ENCODE measurements at regions of chr1 and their contacts with region 1.

Region 1: DNA sequence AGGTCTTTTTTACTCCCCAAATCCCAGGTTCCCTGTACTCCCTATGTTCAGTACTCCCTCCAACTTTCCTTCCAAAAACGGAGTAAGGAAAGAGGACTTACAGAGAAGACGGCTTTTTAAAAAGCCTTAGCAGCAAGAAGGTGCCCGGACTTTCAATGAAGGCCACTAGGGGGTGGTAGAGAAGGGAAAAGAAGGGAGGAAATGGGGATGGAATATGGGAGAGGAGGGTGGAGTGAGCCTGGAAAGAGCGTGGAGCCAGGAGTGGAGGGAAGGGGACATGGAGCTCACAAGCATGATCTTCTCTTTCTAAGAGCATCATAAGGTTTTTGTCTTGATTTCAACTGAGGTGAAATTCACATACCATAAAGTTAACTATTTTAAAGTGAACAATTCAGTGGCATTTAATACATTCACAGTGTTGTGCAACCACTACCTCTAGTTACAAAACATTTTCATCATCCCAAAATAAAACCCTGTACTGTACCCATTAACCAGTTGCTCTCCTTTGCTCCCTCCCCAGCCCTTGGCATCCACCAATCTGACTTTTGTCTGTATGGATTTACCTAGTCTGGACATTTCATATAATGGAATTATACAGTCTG is 129.9 kb downstream of the ZNF281 start:
- DNase-seq: peak; percentile 36 to 84
- H3K4me3 ChIP-seq: no peak overlapping the region
- H3K27ac ChIP-seq: no peak overlapping the region
- H3K4me1 ChIP-seq: peaks cover 0 to 4% (median 0%) of the 10 kb centered on the region in 4 experiments; a peak in 2 of 7 replicates
- H3K27me3 ChIP-seq: no peaks in the 10 kb centered on the region
- CTCF ChIP-seq: peak; percentile 26 to 89 (median 81)
- EP300 ChIP-seq: no peak
- POLR2A ChIP-seq: no peak
- RAD21 ChIP-seq: peak; percentile 88 to 91

Region 2: GRCh38 chr1:199684686-199685273 is 595.1 kb before region 1 on chr1:
- CTCF ChIA-PET with region 1: interaction called, 10 read pairs
- POLR2A ChIA-PET with region 1: interaction called, 3 read pairs
- DNase-seq: no peak
- H3K4me3 ChIP-seq: no peak overlapping the region
- H3K27ac ChIP-seq: no peak overlapping the region
- H3K4me1 ChIP-seq: peaks cover 4 to 18% (median 7%) of the 10 kb centered on the region in 4 experiments; a peak in 5 of 7 replicates
- H3K27me3 ChIP-seq: no peaks in the 10 kb centered on the region
- CTCF ChIP-seq: peak in 2 of 3 experiments; percentile 56 to 73; a peak in 3 of 4 replicates
- EP300 ChIP-seq: no peak
- POLR2A ChIP-seq: no peak
- RAD21 ChIP-seq: peak; percentile 91 to 93

Region 3: GRCh38 chr1:200198247-200198646 is 81.7 kb before region 1 on chr1:
- CTCF ChIA-PET with region 1: no interaction called
- POLR2A ChIA-PET with region 1: no interaction called
- DNase-seq: no peak
- H3K4me3 ChIP-seq: no peak overlapping the region
- H3K27ac ChIP-seq: no peak overlapping the region
- H3K4me1 ChIP-seq: no peaks in the 10 kb centered on the region; a peak in 1 of 7 replicates
- H3K27me3 ChIP-seq: no peaks in the 10 kb centered on the region
- CTCF ChIP-seq: no peak; a peak in 1 of 4 replicates
- EP300 ChIP-seq: no peak
- POLR2A ChIP-seq: no peak
- RAD21 ChIP-seq: no peak

Region 4: DNA sequence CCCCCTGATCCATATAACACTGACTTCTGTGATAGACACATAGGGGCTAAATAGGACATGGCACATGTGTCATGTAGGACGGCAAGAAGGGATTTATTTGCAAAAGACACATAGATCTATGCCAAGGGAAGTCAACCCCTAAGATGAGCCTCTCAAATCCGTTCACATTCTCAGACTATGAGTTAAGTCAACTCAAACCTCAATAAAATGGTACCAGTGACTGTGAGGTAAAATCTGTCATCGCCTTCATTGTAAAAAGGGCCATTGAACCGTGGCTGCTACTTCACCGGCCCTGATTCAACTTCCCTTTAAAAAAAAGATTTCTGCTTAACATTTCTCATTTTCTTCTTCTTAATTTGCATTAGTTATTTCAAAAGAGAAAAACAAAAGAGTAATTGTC is 14.0 kb before region 1 on chr1:
- CTCF ChIA-PET with region 1: interaction called, 56 read pairs
- POLR2A ChIA-PET with region 1: no interaction called
- DNase-seq: no peak
- H3K4me3 ChIP-seq: no peak overlapping the region
- H3K27ac ChIP-seq: no peak overlapping the region
- H3K4me1 ChIP-seq: no peaks in the 10 kb centered on the region
- H3K27me3 ChIP-seq: no peaks in the 10 kb centered on the region
- CTCF ChIP-seq: no peak
- EP300 ChIP-seq: no peak
- POLR2A ChIP-seq: no peak
- RAD21 ChIP-seq: no peak

Region 5: DNA sequence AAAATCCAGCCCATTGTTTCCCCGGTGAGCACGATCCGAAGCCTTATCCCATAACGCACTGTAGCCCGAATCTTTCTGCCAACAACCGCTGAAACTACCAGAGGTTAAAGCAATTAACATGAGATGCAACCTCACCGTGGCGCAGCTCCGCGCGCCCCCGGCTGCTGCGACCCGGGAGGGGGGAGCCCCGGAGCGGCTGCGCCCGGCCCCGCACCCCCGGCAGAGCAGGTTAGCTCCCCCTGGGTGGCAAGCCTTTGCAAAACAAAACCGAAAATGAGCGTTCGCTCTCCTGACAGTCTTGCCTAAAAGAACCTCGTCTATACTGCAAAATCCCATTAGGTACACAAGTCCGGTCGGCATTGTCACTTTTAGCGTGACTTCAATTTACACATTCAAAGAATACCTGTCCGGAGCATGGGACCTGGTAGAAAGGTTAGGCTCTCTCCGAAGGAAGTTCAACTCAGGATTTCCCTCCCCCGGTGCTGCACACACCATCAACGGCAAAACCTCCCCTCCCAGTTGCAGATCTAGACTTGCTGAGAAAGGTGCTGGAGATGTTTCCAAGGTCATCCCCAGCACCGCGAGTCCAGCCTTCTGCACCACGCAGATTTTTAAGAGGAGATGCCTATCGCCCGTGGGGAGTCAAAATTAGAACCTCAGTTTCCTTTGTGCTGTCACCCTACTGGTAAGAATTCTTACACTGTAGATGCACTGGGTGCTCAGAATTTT is 22.4 kb after region 1 on chr1:
- CTCF ChIA-PET with region 1: interaction called, 74 read pairs
- POLR2A ChIA-PET with region 1: no interaction called
- DNase-seq: peak in 1 of 2 experiments; percentile 64
- H3K4me3 ChIP-seq: peak overlapping the region; percentile 25 to 65 (median 56)
- H3K27ac ChIP-seq: no peak overlapping the region
- H3K4me1 ChIP-seq: peaks cover 0 to 6% (median 2%) of the 10 kb centered on the region in 4 experiments; a peak in 4 of 7 replicates
- H3K27me3 ChIP-seq: peaks cover 0 to 15% (median 12%) of the 10 kb centered on the region in 4 experiments; a peak in 5 of 7 replicates
- CTCF ChIP-seq: no peak
- EP300 ChIP-seq: no peak
- POLR2A ChIP-seq: no peak
- RAD21 ChIP-seq: no peak

Region 6: DNA sequence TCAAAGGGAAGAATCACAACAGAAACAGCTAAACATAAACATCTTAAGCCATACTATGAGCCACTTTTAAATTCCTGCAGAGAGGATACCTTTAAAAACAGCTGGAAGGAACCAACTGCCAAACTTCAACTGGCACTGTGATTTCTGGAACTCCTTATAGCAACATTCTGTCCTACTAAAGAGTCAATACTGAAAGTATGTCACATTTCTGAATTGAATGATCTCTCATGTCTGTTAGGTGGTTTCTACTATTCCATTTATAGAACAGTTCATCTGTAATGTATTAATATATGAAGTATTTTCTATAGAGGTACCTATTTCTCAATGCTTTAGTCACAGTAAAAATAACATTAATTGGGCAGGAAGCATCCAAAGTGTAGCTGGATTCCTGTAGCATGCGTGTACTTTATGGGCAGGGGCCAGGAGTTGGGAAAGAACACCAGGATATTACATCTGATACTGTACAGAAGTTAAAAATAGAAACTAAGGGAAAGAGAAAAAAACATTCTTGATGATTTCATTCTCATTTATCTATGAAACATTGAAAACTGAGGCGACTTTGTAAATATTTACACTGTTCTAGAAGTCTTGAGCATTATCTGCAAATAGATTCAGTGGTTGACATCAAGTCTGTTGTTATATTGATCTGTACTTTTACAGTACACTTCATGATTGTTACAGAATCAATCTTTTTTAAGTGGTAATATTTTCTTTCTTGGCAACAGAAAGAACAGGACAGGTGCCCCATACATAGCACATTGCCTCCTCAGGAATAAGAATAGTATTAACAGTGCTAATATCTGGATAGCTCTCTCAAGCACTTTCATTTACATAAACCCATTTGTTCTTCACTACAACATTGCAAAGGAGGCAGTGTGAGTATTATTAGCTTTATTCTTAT is 136.0 kb after region 1 on chr1:
- CTCF ChIA-PET with region 1: interaction called, 22 read pairs
- POLR2A ChIA-PET with region 1: no interaction called
- DNase-seq: no peak
- H3K4me3 ChIP-seq: no peak overlapping the region
- H3K27ac ChIP-seq: no peak overlapping the region
- H3K4me1 ChIP-seq: no peaks in the 10 kb centered on the region; a peak in 1 of 7 replicates
- H3K27me3 ChIP-seq: no peaks in the 10 kb centered on the region
- CTCF ChIP-seq: no peak
- EP300 ChIP-seq: no peak
- POLR2A ChIP-seq: no peak
- RAD21 ChIP-seq: no peak

Region 7: GRCh38 chr1:200478945-200479558 is 199.1 kb after region 1 on chr1:
- CTCF ChIA-PET with region 1: interaction called, 13 read pairs
- POLR2A ChIA-PET with region 1: no interaction called
- DNase-seq: no peak
- H3K4me3 ChIP-seq: no peak overlapping the region
- H3K27ac ChIP-seq: no peak overlapping the region
- H3K4me1 ChIP-seq: peaks cover 0 to 3% (median 0%) of the 10 kb centered on the region in 4 experiments; a peak in 3 of 7 replicates
- H3K27me3 ChIP-seq: no peaks in the 10 kb centered on the region
- CTCF ChIP-seq: no peak
- EP300 ChIP-seq: no peak
- POLR2A ChIP-seq: no peak
- RAD21 ChIP-seq: no peak

Region 8: DNA sequence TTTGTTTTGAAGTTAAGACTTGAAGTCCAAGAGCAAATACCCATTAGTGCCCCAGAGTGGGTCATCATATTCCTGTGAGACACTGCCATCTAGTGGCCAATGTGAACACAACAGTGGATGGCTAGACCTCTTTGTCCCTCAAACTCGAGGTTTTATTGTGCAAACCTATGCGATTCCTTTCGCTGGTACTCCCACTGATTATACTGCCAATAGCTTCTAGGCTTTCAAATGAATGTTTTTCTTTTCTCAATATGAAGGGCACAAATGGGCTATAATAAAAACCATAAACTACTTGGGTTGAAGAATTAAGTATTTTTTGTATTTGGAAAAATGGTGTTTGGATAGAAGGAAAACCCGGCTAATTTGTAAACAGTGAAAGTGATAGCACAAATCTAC is 230.3 kb after region 1 on chr1:
- CTCF ChIA-PET with region 1: interaction called, 50 read pairs
- POLR2A ChIA-PET with region 1: no interaction called
- DNase-seq: peak in 1 of 2 experiments; percentile 83
- H3K4me3 ChIP-seq: no peak overlapping the region
- H3K27ac ChIP-seq: no peak overlapping the region
- H3K4me1 ChIP-seq: no peaks in the 10 kb centered on the region
- H3K27me3 ChIP-seq: no peaks in the 10 kb centered on the region
- CTCF ChIP-seq: peak; percentile 47 to 91 (median 82)
- EP300 ChIP-seq: no peak
- POLR2A ChIP-seq: no peak
- RAD21 ChIP-seq: peak; percentile 98

Measured in H1 (cell line).